Naive thymus-derived CD4-positive, alpha-beta T cell (primary cell): ENCODE measurements at regions of chrX and their contacts with region 1.

Region 1: GRCh38 chrX:78555401-78555980 is 103.6 kb downstream of the RTL3 start:
- DNase-seq: peak in 5 of 9 donors; percentile 25 to 44 (median 29)
- ATAC-seq: peak; percentile 59
- H3K4me3 ChIP-seq: no peak overlapping the region
- H3K4me3 Mint-ChIP-seq: peak overlapping the region in 1 of 10 donors; percentile 30
- H3K27ac ChIP-seq: no peak overlapping the region
- H3K27ac Mint-ChIP-seq: peak overlapping the region in 6 of 9 donors; percentile 66 to 83 (median 73)
- H3K4me1 ChIP-seq: peaks cover 0 to 2% of the 10 kb centered on the region in 2 donors
- H3K4me1 Mint-ChIP-seq: peaks cover 0 to 7% (median 3%) of the 10 kb centered on the region in 7 donors
- H3K27me3 ChIP-seq: no peaks in the 10 kb centered on the region
- H3K27me3 Mint-ChIP-seq: no peaks in the 10 kb centered on the region

Region 2: GRCh38 chrX:78573630-78574029 is 18.1 kb after region 1 on chrX:
- CTCF ChIA-PET with region 1: no interaction called
- POLR2A ChIA-PET with region 1: no interaction called
- intact Hi-C with region 1: no loop called
- DNase-seq: no peak
- ATAC-seq: no peak
- H3K4me3 ChIP-seq: no peak overlapping the region
- H3K4me3 Mint-ChIP-seq: no peak overlapping the region
- H3K27ac ChIP-seq: no peak overlapping the region
- H3K27ac Mint-ChIP-seq: no peak overlapping the region
- H3K4me1 ChIP-seq: no peaks in the 10 kb centered on the region
- H3K4me1 Mint-ChIP-seq: peaks cover 0 to 13% (median 0%) of the 10 kb centered on the region in 7 donors
- H3K27me3 ChIP-seq: no peaks in the 10 kb centered on the region
- H3K27me3 Mint-ChIP-seq: no peaks in the 10 kb centered on the region

Region 3: DNA sequence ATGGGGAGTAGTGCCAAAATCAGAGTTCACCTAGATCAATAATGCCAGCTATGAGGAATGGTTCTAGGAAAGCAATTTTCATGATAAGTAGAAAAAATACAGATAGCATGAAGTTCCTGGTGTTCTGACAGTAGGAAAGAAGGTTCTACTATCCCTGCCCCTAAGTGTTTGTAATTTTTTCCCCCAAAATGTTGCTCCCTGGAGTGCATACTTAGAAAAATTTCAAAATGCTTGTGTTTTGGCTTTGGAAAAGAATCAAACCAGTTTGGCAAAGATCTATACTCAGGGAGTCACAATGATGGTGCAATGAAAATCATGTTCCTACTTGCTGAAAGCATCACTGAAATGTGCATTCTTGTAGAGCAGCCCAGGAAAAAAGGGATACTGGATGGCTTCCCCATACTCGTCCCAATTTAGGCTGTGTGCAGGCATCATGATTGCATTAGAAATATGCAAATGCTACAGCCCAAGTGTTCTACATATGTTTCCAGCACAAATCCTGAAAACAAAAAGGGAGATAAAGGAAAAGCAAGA is 266.7 kb after region 1 on chrX:
- CTCF ChIA-PET with region 1: no interaction called
- POLR2A ChIA-PET with region 1: no interaction called
- intact Hi-C with region 1: no loop called
- DNase-seq: no peak
- ATAC-seq: no peak
- H3K4me3 ChIP-seq: no peak overlapping the region
- H3K4me3 Mint-ChIP-seq: no peak overlapping the region
- H3K27ac ChIP-seq: no peak overlapping the region
- H3K27ac Mint-ChIP-seq: no peak overlapping the region
- H3K4me1 ChIP-seq: no peaks in the 10 kb centered on the region
- H3K4me1 Mint-ChIP-seq: no peaks in the 10 kb centered on the region
- H3K27me3 ChIP-seq: no peaks in the 10 kb centered on the region
- H3K27me3 Mint-ChIP-seq: no peaks in the 10 kb centered on the region

Region 4: DNA sequence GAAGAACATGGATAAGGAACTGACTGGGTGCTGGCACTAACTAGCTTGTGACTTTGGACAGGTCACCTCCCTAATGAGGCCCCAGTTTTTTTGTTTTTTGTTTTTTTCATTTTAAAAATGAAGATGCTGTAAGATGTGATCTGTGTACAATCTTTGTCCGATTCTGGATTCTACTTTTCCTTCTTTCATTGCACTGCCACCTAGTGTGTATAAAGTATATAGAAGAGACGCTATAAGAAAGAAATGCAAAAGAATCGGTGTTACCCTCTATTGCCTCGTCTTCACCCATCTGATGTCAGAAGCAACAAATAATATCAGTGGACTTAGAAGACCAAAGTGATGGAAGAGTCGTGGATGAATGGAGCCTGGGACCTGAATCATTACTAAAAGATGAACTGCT is 331.1 kb after region 1 on chrX:
- CTCF ChIA-PET with region 1: interaction called, 5 read pairs
- POLR2A ChIA-PET with region 1: no interaction called
- intact Hi-C with region 1: loop called (anchors 1 kb)
- DNase-seq: peak in 6 of 9 donors; percentile 2 to 33 (median 18)
- ATAC-seq: peak; percentile 67
- H3K4me3 ChIP-seq: no peak overlapping the region
- H3K4me3 Mint-ChIP-seq: peak overlapping the region in 3 of 10 donors; percentile 0 to 46 (median 38)
- H3K27ac ChIP-seq: no peak overlapping the region
- H3K27ac Mint-ChIP-seq: peak overlapping the region in 5 of 9 donors; percentile 6 to 51 (median 13)
- H3K4me1 ChIP-seq: peaks cover 0 to 4% of the 10 kb centered on the region in 2 donors
- H3K4me1 Mint-ChIP-seq: peaks cover 4 to 11% (median 9%) of the 10 kb centered on the region in 7 donors
- H3K27me3 ChIP-seq: no peaks in the 10 kb centered on the region
- H3K27me3 Mint-ChIP-seq: no peaks in the 10 kb centered on the region

Region 5: DNA sequence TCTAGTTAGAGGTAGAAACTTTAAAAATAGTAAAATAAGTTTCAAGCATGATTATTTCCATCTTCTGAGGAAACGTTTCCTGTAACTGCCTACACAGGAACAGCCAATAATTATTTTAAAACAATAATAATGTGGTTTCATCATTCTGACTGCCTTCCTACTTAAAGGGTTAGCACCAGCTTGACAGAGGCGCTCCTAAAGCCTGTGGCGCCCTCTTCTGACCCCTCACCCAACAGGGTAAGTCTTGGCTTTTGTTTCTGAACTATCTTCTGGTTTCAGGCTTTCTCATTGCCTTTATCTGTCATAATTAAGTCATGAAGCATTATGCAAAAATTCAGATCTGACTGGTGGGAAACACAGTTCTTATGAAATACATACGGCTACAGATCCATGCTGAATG is 714.9 kb after region 1 on chrX:
- CTCF ChIA-PET with region 1: interaction called, 3 read pairs
- POLR2A ChIA-PET with region 1: no interaction called
- intact Hi-C with region 1: loop called (anchors 1 kb)
- DNase-seq: peak; percentile 29 to 76 (median 68)
- ATAC-seq: peak; percentile 98
- H3K4me3 ChIP-seq: no peak overlapping the region
- H3K4me3 Mint-ChIP-seq: peak overlapping the region; percentile 17 to 77 (median 56)
- H3K27ac ChIP-seq: peak overlapping the region; percentile 61
- H3K27ac Mint-ChIP-seq: peak overlapping the region in 8 of 9 donors; percentile 84 to 94 (median 90)
- H3K4me1 ChIP-seq: peaks cover 24 to 34% of the 10 kb centered on the region in 2 donors
- H3K4me1 Mint-ChIP-seq: peaks cover 13 to 68% (median 45%) of the 10 kb centered on the region in 7 donors
- H3K27me3 ChIP-seq: no peaks in the 10 kb centered on the region
- H3K27me3 Mint-ChIP-seq: no peaks in the 10 kb centered on the region

Region 6: DNA sequence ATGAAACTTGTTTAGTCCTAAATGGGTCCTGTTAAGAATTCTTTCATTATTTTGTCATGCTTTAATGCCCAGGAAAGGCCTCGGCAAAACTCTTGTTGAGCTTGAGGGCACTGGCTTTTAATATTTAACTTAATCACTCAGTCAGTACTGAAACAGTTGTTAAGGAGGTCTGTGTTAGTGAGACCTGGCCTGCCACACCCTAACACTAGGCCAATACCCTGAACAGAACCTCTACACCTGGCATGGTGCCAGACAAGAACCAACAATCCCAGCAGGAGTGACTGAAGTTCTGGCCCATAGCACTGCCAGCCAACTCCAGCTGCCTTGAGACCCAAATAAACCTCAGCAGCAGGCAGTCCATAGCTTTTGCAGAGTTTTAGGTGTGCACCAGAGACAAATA is 897.4 kb after region 1 on chrX:
- CTCF ChIA-PET with region 1: interaction called, 3 read pairs
- POLR2A ChIA-PET with region 1: interaction called, 3 read pairs
- intact Hi-C with region 1: loop called (anchors 1 kb)
- DNase-seq: no peak
- ATAC-seq: no peak
- H3K4me3 ChIP-seq: no peak overlapping the region
- H3K4me3 Mint-ChIP-seq: no peak overlapping the region
- H3K27ac ChIP-seq: no peak overlapping the region
- H3K27ac Mint-ChIP-seq: no peak overlapping the region
- H3K4me1 ChIP-seq: no peaks in the 10 kb centered on the region
- H3K4me1 Mint-ChIP-seq: peaks cover 0 to 10% (median 2%) of the 10 kb centered on the region in 7 donors
- H3K27me3 ChIP-seq: no peaks in the 10 kb centered on the region
- H3K27me3 Mint-ChIP-seq: no peaks in the 10 kb centered on the region